CD8-positive, alpha-beta T cell (primary cell): ENCODE measurements at regions of chr11 and their contacts with region 1.

Region 1: DNA sequence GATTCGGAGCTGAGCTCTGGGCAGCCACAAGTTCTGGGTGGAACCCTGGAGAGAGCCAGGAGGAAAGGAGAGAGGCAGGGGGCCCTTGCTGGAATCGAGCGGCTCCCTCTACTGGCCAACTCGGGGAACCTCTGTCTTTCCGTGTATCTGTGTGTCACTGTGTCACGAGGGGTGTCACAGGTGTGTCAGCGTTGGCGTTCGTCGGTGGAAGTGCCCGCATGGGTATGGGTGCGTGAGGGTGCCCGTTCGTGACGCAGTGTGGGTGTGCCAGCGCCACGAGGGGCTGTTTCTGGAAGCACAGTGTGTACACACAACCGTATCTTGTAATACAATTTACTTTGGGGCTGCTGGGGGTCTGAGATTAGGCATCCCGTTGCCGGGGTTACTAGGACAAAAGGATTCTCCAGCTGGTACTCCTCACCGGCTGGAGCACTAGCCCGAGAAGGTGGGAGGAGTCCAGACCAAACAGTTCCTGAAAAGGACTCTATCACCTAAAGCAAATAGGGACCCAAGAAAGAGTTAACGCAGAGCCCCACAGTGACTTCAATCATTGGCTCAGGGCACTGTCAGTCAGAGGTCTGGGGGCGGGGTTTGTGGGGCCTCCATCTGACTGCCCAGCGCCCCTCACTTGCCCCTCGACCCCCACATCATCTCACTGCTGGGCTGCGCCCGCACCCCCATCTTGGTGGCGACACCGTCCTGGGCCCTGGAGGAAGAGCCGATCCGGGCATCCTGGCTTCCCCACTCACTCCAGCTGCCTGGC is 2.6 kb upstream of the BCL9L start:
- DNase-seq: peak; percentile 87 to 100 (median 94)
- ATAC-seq: peak; percentile 58
- H3K4me3 ChIP-seq: peak overlapping the region; percentile 74 to 85
- H3K4me3 Mint-ChIP-seq: peak overlapping the region; percentile 96
- H3K27ac ChIP-seq: peak overlapping the region; percentile 88 to 97
- H3K27ac Mint-ChIP-seq: peak overlapping the region; percentile 98
- H3K4me1 ChIP-seq: peaks cover 29% of the 10 kb centered on the region
- H3K4me1 Mint-ChIP-seq: peaks cover 44% of the 10 kb centered on the region
- H3K27me3 ChIP-seq: no peaks in the 10 kb centered on the region
- H3K27me3 Mint-ChIP-seq: no peaks in the 10 kb centered on the region
- CTCF ChIP-seq: peak; percentile 79

Region 2: GRCh38 chr11:118304568-118305248 is 623.6 kb before region 1 on chr11 and contains the start of gene CD3E:
- CTCF ChIA-PET with region 1: no interaction called
- POLR2A ChIA-PET with region 1: no interaction called
- intact Hi-C with region 1: loop called in 1 of 2 experiments (anchors 5 kb)
- DNase-seq: peak; percentile 29 to 85 (median 73)
- ATAC-seq: peak; percentile 68
- H3K4me3 ChIP-seq: peak within 1 kb of the TSS; percentile 83 to 90
- H3K4me3 Mint-ChIP-seq: peak within 1 kb of the TSS; percentile 99
- H3K27ac ChIP-seq: peak within 1 kb of the TSS; percentile 76 to 86
- H3K27ac Mint-ChIP-seq: peak within 1 kb of the TSS; percentile 100
- H3K4me1 ChIP-seq: peaks cover 54% of the 10 kb centered on the region
- H3K4me1 Mint-ChIP-seq: peaks cover 82% of the 10 kb centered on the region
- H3K27me3 ChIP-seq: no peaks in the 10 kb centered on the region
- H3K27me3 Mint-ChIP-seq: no peaks in the 10 kb centered on the region
- CTCF ChIP-seq: no peak
- total RNA-seq, gene CD3E: 413 to 436 TPM

Region 3: GRCh38 chr11:118610804-118611795 is 317.2 kb before region 1 on chr11:
- CTCF ChIA-PET with region 1: no interaction called
- POLR2A ChIA-PET with region 1: interaction called, 3 read pairs
- intact Hi-C with region 1: loop called in 1 of 2 experiments (anchors 10 kb)
- DNase-seq: peak; percentile 64 to 91 (median 85)
- ATAC-seq: peak; percentile 34
- H3K4me3 ChIP-seq: peak overlapping the region; percentile 40 to 61
- H3K4me3 Mint-ChIP-seq: peak overlapping the region; percentile 78
- H3K27ac ChIP-seq: no peak overlapping the region
- H3K27ac Mint-ChIP-seq: no peak overlapping the region
- H3K4me1 ChIP-seq: peaks cover 28% of the 10 kb centered on the region
- H3K4me1 Mint-ChIP-seq: peaks cover 25% of the 10 kb centered on the region
- H3K27me3 ChIP-seq: peaks cover 0 to 13% of the 10 kb centered on the region in 2 experiments
- H3K27me3 Mint-ChIP-seq: no peaks in the 10 kb centered on the region
- CTCF ChIP-seq: peak; percentile 85

Region 4: DNA sequence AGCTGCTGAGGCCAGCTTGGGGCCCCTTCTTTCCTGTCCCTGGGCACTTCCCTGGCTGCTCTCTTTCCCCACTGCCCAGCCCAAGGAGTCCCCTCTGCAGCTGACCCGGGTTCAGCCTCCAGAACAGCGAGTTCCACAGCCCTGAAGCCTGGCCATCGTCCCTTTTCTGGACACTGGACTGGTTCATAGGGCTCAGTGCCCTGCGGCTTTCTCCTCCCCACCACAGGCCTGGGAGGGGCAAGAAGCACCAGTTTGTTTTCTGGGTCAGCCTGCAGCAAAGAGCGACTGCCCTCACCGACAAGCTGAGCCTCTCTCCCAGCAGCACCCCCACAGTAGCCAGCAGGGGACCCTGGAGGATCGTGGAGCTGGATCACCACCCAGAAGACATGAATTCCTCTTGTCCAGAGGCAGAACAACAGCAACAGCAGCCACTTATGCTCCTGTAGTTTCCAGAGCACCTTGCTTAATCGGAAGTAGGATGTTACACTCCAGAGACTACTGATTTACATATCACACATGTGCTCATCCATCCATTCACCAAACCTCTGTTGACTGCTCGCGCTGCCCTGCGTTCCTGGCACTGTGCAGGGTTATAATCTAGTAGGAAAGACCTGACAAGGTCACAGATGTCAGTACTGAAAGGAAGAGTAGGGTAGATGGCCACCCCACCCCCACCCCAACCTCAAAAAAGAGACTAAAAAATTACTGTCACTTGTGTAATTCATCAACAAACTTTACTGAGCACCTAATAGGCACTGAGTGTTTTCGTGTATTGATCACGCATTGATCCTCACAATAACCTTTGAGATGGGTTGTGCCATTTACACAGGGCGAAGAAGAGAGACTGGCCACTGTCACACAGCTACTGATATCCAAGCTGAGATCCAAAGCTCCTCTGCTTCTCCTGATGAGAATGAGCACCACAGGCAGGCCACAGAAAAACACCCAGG is 57.6 kb before region 1 on chr11:
- CTCF ChIA-PET with region 1: interaction called, 19 read pairs
- POLR2A ChIA-PET with region 1: interaction called, 10 read pairs
- intact Hi-C with region 1: loop called (anchors 1 kb)
- DNase-seq: peak in 3 of 9 experiments; percentile 19 to 72 (median 61)
- ATAC-seq: peak; percentile 41
- H3K4me3 ChIP-seq: peak overlapping the region; percentile 22 to 30
- H3K4me3 Mint-ChIP-seq: peak overlapping the region; percentile 79
- H3K27ac ChIP-seq: peak overlapping the region; percentile 83 to 86
- H3K27ac Mint-ChIP-seq: peak overlapping the region; percentile 99
- H3K4me1 ChIP-seq: peaks cover 61% of the 10 kb centered on the region
- H3K4me1 Mint-ChIP-seq: peaks cover 60% of the 10 kb centered on the region
- H3K27me3 ChIP-seq: no peaks in the 10 kb centered on the region
- H3K27me3 Mint-ChIP-seq: no peaks in the 10 kb centered on the region
- CTCF ChIP-seq: no peak

Region 5: GRCh38 chr11:118895142-118896039 is 32.9 kb before region 1 on chr11:
- CTCF ChIA-PET with region 1: interaction called, 20 read pairs
- POLR2A ChIA-PET with region 1: interaction called, 20 read pairs
- intact Hi-C with region 1: loop called in 1 of 2 experiments (anchors 5 kb)
- DNase-seq: peak; percentile 54 to 92 (median 80)
- ATAC-seq: peak; percentile 73
- H3K4me3 ChIP-seq: peak overlapping the region in 1 of 2 experiments; percentile 35
- H3K4me3 Mint-ChIP-seq: peak overlapping the region; percentile 63
- H3K27ac ChIP-seq: peak overlapping the region; percentile 70 to 77
- H3K27ac Mint-ChIP-seq: peak overlapping the region; percentile 95
- H3K4me1 ChIP-seq: peaks cover 83% of the 10 kb centered on the region
- H3K4me1 Mint-ChIP-seq: peaks cover 84% of the 10 kb centered on the region
- H3K27me3 ChIP-seq: no peaks in the 10 kb centered on the region
- H3K27me3 Mint-ChIP-seq: no peaks in the 10 kb centered on the region
- CTCF ChIP-seq: no peak

Region 6: GRCh38 chr11:118914178-118914918 is 13.9 kb before region 1 on chr11:
- CTCF ChIA-PET with region 1: no interaction called
- POLR2A ChIA-PET with region 1: interaction called, 201 read pairs
- intact Hi-C with region 1: loop called in 1 of 2 experiments (anchors 2 kb)
- DNase-seq: peak; percentile 58 to 95 (median 86)
- ATAC-seq: peak; percentile 54
- H3K4me3 ChIP-seq: peak overlapping the region; percentile 49 to 58
- H3K4me3 Mint-ChIP-seq: peak overlapping the region; percentile 92
- H3K27ac ChIP-seq: peak overlapping the region; percentile 92 to 94
- H3K27ac Mint-ChIP-seq: peak overlapping the region; percentile 99
- H3K4me1 ChIP-seq: peaks cover 84% of the 10 kb centered on the region
- H3K4me1 Mint-ChIP-seq: peaks cover 81% of the 10 kb centered on the region
- H3K27me3 ChIP-seq: no peaks in the 10 kb centered on the region
- H3K27me3 Mint-ChIP-seq: no peaks in the 10 kb centered on the region
- CTCF ChIP-seq: no peak

Region 7: GRCh38 chr11:118956094-118956846 is 28.0 kb after region 1 on chr11 and contains the start of gene UPK2:
- CTCF ChIA-PET with region 1: interaction called, 18 read pairs
- POLR2A ChIA-PET with region 1: interaction called, 8 read pairs
- intact Hi-C with region 1: loop called (anchors 1 kb)
- DNase-seq: peak; percentile 80 to 94 (median 88)
- ATAC-seq: peak; percentile 99
- H3K4me3 ChIP-seq: no peak within 1 kb of the TSS
- H3K4me3 Mint-ChIP-seq: no peak within 1 kb of the TSS
- H3K27ac ChIP-seq: no peak within 1 kb of the TSS
- H3K27ac Mint-ChIP-seq: peak within 1 kb of the TSS; percentile 35
- H3K4me1 ChIP-seq: peaks cover 7% of the 10 kb centered on the region
- H3K4me1 Mint-ChIP-seq: peaks cover 6% of the 10 kb centered on the region
- H3K27me3 ChIP-seq: no peaks in the 10 kb centered on the region
- H3K27me3 Mint-ChIP-seq: peaks cover 2% of the 10 kb centered on the region
- CTCF ChIP-seq: peak; percentile 82
- total RNA-seq, gene UPK2: not detected